Stomach (tissue), 19 donors: ENCODE measurements at regions of chr21 and their contacts with region 1.

Region 1: GRCh38 chr21:36113647-36114428 is 21.0 kb upstream of the CBR3 start:
- DNase-seq: peak; percentile 82 to 85
- H3K4me3 ChIP-seq: peak overlapping the region; percentile 5 to 50 (median 40)
- H3K27ac ChIP-seq: peak overlapping the region; percentile 25 to 80 (median 77)
- H3K4me1 ChIP-seq: peaks cover 4 to 24% (median 13%) of the 10 kb centered on the region in 4 donors
- H3K27me3 ChIP-seq: no peaks in the 10 kb centered on the region
- CTCF ChIP-seq: no peak
- EP300 ChIP-seq: no peak
- POLR2A ChIP-seq: no peak

Region 2: DNA sequence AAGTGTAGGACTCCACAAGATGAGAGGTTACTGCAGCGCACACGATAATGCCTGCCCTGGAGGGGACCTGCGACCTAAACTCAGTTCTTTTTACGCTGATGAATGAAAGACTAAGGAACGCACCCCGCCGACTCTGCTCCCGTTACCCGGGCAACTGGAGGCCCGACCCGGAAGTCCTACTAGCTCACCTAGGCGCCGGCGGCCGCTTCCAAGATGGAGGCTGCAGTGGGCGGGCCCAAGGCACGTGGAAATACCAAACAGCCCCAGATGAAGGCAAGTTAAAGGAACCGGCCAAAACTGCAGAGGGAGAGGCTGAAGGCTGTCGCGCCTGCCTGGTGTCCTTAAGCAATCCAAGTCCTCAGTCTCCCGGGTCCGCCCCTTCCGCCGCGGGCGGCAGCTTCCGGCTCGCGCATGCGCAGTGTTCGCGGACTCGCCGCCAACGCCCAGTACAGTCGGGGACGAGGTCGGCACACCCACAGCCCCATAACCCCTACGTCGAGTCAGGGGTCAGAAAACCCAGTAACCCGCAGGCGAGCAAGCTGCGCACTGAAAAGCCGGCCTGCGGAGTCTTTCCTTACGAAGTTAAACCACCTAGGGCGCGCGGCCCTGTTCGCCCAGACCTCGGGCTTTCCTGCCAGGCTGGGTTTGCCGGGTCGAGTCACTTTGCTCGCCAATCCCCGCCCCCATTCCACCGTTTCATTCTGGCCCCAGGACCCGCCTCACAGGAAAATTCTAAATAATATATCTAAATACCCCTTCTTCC is 53.5 kb before region 1 on chr21 and contains the start of gene SETD4:
- intact Hi-C with region 1: loop called (anchors 5 kb)
- DNase-seq: peak; percentile 93 to 97
- H3K4me3 ChIP-seq: peak within 1 kb of the TSS; percentile 75 to 99 (median 92)
- H3K27ac ChIP-seq: peak within 1 kb of the TSS; percentile 91 to 94 (median 92)
- H3K4me1 ChIP-seq: peaks cover 11 to 30% (median 27%) of the 10 kb centered on the region in 4 donors
- H3K27me3 ChIP-seq: no peaks in the 10 kb centered on the region
- CTCF ChIP-seq: peak in 1 of 7 experiments; percentile 5
- EP300 ChIP-seq: no peak
- POLR2A ChIP-seq: peak in 1 of 4 donors; percentile 39
- total RNA-seq, gene SETD4: 11.6 to 87.5 (median 46.4) TPM

Region 3: DNA sequence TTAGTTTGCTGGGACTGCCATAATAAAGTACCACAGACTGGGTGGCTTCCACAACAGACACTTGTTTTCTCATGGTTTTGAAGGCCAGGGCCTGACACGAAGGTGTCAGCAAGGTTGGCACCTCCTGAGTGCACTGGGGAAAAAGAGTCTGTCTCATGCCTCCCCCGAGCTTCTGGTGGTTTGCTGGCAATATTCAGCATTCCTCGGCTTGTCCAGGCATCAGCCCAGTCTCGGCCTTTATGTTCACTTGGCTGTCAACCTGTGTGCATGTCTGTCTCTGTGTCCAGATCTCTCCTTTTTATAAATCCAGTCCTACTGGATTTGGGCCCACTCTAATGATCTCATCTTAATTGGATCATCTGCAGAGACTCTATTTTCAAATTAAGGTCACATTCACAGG is 115.3 kb after region 1 on chr21:
- intact Hi-C with region 1: no loop called
- DNase-seq: no peak
- H3K4me3 ChIP-seq: no peak overlapping the region
- H3K27ac ChIP-seq: no peak overlapping the region
- H3K4me1 ChIP-seq: peaks cover 14 to 21% (median 17%) of the 10 kb centered on the region in 4 donors
- H3K27me3 ChIP-seq: no peaks in the 10 kb centered on the region
- CTCF ChIP-seq: no peak
- EP300 ChIP-seq: no peak
- POLR2A ChIP-seq: no peak